Sigmoid colon (tissue), 7 donors: ENCODE measurements at regions of chr1 and their contacts with region 1.

Region 1: GRCh38 chr1:247487057-247487456 is 29.2 kb upstream of the OR2B11 start:
- DNase-seq: no peak
- H3K4me3 ChIP-seq: no peak overlapping the region
- H3K27ac ChIP-seq: no peak overlapping the region
- H3K4me1 ChIP-seq: no peaks in the 10 kb centered on the region
- H3K27me3 ChIP-seq: no peaks in the 10 kb centered on the region
- CTCF ChIP-seq: peak in 2 of 4 experiments; percentile 18 to 28
- EP300 ChIP-seq: no peak
- POLR2A ChIP-seq: no peak

Region 2: GRCh38 chr1:247390116-247390791 is 96.8 kb before region 1 on chr1:
- intact Hi-C with region 1: loop called (anchors 5 kb)
- DNase-seq: peak; percentile 82
- H3K4me3 ChIP-seq: no peak overlapping the region
- H3K27ac ChIP-seq: no peak overlapping the region
- H3K4me1 ChIP-seq: no peaks in the 10 kb centered on the region
- H3K27me3 ChIP-seq: no peaks in the 10 kb centered on the region
- CTCF ChIP-seq: peak; percentile 60 to 89 (median 72)
- EP300 ChIP-seq: no peak
- POLR2A ChIP-seq: no peak

Region 3: DNA sequence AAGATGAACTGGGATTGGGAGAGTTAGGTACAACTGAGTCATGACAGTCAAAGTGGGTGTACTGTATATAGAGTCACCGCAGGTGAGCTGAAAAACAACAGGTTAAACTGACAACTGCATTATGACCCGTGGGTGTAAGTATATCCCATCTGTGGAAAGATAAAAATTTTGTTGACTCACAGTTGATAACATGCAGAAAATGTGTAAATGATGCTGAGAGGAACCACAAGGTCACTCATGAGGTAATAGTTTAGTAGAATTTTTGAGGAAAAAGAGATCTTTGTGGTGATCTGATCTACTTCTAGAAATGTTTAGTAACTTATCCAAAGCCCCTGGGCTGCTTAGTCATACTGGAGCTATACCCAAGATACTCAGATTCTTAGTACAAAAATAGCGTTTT is 48.3 kb after region 1 on chr1:
- intact Hi-C with region 1: no loop called
- DNase-seq: no peak
- H3K4me3 ChIP-seq: no peak overlapping the region
- H3K27ac ChIP-seq: no peak overlapping the region
- H3K4me1 ChIP-seq: no peaks in the 10 kb centered on the region
- H3K27me3 ChIP-seq: peaks cover 0 to 7% (median 0%) of the 10 kb centered on the region in 3 donors
- CTCF ChIP-seq: no peak
- EP300 ChIP-seq: no peak
- POLR2A ChIP-seq: no peak